OCI-LY7 (cell line): ENCODE measurements at regions of chr1 and their contacts with region 1.

Region 1: GRCh38 chr1:65850281-65850680 is 57.6 kb downstream of the PDE4B start:
- DNase-seq: no peak
- H3K4me3 ChIP-seq: no peak overlapping the region
- H3K27ac ChIP-seq: no peak overlapping the region
- H3K4me1 ChIP-seq: no peaks in the 10 kb centered on the region
- CTCF ChIP-seq: no peak

Region 2: GRCh38 chr1:65911679-65912078 is 61.4 kb after region 1 on chr1:
- CTCF ChIA-PET with region 1: no interaction called
- POLR2A ChIA-PET with region 1: no interaction called
- intact Hi-C with region 1: loop called (anchors 10 kb)
- DNase-seq: no peak
- H3K4me3 ChIP-seq: no peak overlapping the region
- H3K27ac ChIP-seq: no peak overlapping the region
- H3K4me1 ChIP-seq: no peaks in the 10 kb centered on the region
- CTCF ChIP-seq: no peak

Region 3: GRCh38 chr1:65948609-65949229 is 98.4 kb after region 1 on chr1:
- CTCF ChIA-PET with region 1: no interaction called
- POLR2A ChIA-PET with region 1: no interaction called
- intact Hi-C with region 1: no loop called
- DNase-seq: no peak
- H3K4me3 ChIP-seq: no peak overlapping the region
- H3K27ac ChIP-seq: no peak overlapping the region
- H3K4me1 ChIP-seq: no peaks in the 10 kb centered on the region
- CTCF ChIP-seq: 0 out of 2 replicates have a peak, but pooled peaks have one; percentile 16

Region 4: DNA sequence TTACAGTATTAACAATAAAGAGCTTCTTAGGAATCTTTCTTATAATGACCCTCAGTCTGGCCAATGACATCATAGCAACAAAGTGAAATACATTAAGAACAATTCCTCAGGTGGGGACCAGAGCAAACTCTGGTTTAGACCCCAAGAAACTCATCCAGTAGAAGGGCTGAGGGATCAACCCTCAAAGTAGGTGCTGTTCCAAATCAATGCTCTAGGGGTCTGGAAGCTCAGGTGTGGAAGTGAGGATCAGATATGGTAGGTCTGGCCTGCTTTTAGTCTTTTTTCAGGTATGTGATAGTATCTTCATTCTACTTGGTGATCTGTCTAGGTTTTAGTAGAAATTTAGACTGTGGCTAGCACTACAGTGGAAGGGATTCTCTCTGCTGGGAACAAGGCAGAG is 234.2 kb after region 1 on chr1:
- CTCF ChIA-PET with region 1: no interaction called
- POLR2A ChIA-PET with region 1: no interaction called
- intact Hi-C with region 1: no loop called
- DNase-seq: no peak
- H3K4me3 ChIP-seq: no peak overlapping the region
- H3K27ac ChIP-seq: no peak overlapping the region
- H3K4me1 ChIP-seq: no peaks in the 10 kb centered on the region
- CTCF ChIP-seq: no peak

Region 5: GRCh38 chr1:66282343-66282852 is 432.1 kb after region 1 on chr1:
- CTCF ChIA-PET with region 1: no interaction called
- POLR2A ChIA-PET with region 1: no interaction called
- intact Hi-C with region 1: no loop called
- DNase-seq: peak; percentile 85
- H3K4me3 ChIP-seq: peak overlapping the region; percentile 32
- H3K27ac ChIP-seq: peak overlapping the region; percentile 59
- H3K4me1 ChIP-seq: peaks cover 73% of the 10 kb centered on the region
- CTCF ChIP-seq: peak; percentile 62